ENCODE measurements at regions of chr9 and their contacts with region 1.

Region 1: GRCh38 chr9:36036780-36037548 is at the start of gene RECK:
- H3K4me3 Mint-ChIP-seq: peak within 1 kb of the TSS; percentile 84
- H3K27ac Mint-ChIP-seq: peak within 1 kb of the TSS; percentile 71
- H3K4me1 Mint-ChIP-seq: peaks cover 16% of the 10 kb centered on the region
- H3K27me3 Mint-ChIP-seq: peaks cover 5% of the 10 kb centered on the region

Region 2: GRCh38 chr9:36008774-36009300 is 28.1 kb before region 1 on chr9:
- intact Hi-C with region 1: loop called (anchors 1 kb)
- H3K4me3 Mint-ChIP-seq: no peak overlapping the region
- H3K27ac Mint-ChIP-seq: peak overlapping the region; percentile 21
- H3K4me1 Mint-ChIP-seq: peaks cover 23% of the 10 kb centered on the region
- H3K27me3 Mint-ChIP-seq: peaks cover 54% of the 10 kb centered on the region

Region 3: DNA sequence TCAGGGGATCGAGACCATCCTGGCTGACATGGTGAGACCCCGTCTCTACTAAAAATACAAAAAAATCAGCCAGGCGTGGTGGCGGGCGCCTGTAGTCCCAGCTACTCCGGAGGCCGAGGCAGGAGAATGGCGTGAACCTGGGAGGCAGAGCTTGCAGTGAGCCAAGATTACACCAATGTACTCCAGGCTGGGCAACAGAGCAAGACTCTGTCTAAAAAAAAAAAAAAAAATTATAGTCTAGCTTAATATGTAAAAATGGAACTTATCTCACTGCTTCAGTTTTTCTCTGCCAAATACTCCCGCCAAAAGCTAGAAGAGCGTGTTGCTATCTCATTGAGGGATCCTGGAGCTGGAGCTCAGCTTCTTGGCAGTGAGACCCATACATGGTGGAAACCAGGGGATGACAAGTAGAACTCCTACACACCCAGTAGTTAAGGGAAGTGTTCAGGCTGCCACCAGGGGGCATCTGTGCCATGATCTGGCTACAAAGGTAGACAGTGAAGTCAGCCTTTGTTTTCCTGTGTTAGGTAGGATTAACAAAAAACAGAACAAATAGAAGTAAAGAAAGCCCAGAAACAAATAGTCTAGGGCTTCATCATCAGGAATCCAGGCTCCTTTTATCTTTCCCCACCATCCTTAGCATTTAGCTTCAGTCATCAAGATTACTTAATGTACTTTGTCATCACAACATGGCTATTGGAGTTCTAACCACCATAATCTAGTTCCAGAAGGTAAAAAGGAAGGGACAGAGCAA is 66.0 kb after region 1 on chr9:
- intact Hi-C with region 1: no loop called
- H3K4me3 Mint-ChIP-seq: no peak overlapping the region
- H3K27ac Mint-ChIP-seq: peak overlapping the region; percentile 43
- H3K4me1 Mint-ChIP-seq: peaks cover 8% of the 10 kb centered on the region
- H3K27me3 Mint-ChIP-seq: no peaks in the 10 kb centered on the region

Region 4: DNA sequence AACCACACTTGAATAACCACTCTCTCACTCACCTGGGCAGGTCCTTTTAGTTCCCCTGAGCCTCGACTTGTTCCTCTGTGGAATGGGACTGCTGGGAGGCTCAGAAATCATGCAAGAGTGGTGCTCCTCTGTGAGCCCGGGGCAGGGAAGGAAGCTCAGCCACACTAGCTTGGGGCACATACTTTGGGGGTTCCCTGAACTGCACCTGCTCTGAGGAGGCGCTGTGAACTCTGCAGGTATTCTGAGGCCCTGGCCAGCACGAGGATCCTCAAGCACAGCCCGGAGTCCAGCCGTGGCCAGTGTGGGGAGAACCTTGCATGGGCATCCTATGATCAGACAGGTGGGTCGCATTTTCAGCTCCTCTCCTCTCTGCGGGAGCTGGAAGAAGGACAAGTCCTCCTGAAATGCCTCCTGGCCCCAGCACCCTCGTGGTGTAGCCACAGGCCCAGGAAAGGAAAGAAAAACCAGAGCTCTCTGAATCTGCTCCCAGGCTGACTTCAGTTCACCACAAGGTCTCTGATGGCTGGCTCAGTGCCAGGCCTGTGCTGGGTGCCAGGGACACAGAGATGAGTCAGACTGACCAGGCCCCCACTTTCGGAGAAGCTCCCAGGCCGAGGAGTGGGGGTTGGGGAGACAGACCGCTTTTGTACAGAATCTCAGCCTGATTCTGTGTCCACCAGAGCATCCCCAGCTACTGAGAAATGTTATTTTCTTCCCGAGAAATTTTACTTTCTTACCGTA is 111.5 kb after region 1 on chr9:
- intact Hi-C with region 1: no loop called
- H3K4me3 Mint-ChIP-seq: no peak overlapping the region
- H3K27ac Mint-ChIP-seq: no peak overlapping the region
- H3K4me1 Mint-ChIP-seq: peaks cover 86% of the 10 kb centered on the region
- H3K27me3 Mint-ChIP-seq: no peaks in the 10 kb centered on the region

Measured in dendritic cell treated with granulocyte-macrophage colony-stimulating factor and Interleukin-4, amounts not matched to agents 40 ng/mL and 50 ng/mL, for 4 days (primary cell).